Activated CD8-positive, alpha-beta T cell treated with anti-CD3 and anti-CD28 coated beads for 36 hours (primary cell): ENCODE measurements at regions of chr7 and their contacts with region 1.

Region 1: DNA sequence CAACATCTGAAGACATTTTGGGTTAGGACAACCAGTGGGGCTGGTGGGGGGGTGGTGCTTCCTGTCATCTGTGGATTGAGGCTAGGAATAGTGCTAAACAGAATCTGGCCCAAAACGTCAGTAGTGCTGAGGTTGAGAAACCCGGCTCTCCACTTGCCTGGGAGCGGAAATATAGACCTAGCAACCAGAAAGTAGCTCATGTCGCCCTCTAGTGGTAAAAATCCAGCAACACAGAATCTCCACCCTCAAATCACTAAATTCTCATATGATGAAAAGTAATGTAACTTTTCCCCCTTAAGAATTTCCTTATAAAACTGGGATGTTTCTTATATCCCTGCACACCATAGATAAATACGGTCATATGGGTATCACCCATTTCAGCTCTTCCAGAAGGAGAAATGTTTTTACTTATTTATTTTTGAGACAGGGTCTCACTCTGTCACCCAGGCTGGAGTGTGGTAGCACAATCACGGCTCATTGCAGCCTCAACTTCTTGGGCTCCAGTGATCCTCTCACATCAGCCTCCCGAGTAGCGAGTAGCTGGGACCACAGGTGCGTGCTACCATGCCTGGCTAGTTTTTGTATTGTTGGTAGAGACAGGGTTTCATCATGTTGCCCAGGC is 34.4 kb downstream of the ZC3HAV1 start:
- DNase-seq: peak; percentile 80
- ATAC-seq: peak; percentile 70
- H3K4me3 Mint-ChIP-seq: peak overlapping the region; percentile 37
- H3K27ac Mint-ChIP-seq: peak overlapping the region; percentile 85
- H3K4me1 Mint-ChIP-seq: peaks cover 62% of the 10 kb centered on the region
- H3K27me3 Mint-ChIP-seq: no peaks in the 10 kb centered on the region
- CTCF ChIP-seq: peak; percentile 80

Region 2: GRCh38 chr7:138886501-138886917 is 188.6 kb before region 1 on chr7:
- CTCF ChIA-PET with region 1: interaction called, 21 read pairs
- POLR2A ChIA-PET with region 1: no interaction called
- intact Hi-C with region 1: loop called (anchors 10 kb)
- DNase-seq: peak; percentile 55
- ATAC-seq: peak; percentile 78
- H3K4me3 Mint-ChIP-seq: no peak overlapping the region
- H3K27ac Mint-ChIP-seq: peak overlapping the region; percentile 77
- H3K4me1 Mint-ChIP-seq: peaks cover 18% of the 10 kb centered on the region
- H3K27me3 Mint-ChIP-seq: no peaks in the 10 kb centered on the region
- CTCF ChIP-seq: peak; percentile 78

Region 3: GRCh38 chr7:139029353-139029752 is 45.8 kb before region 1 on chr7:
- CTCF ChIA-PET with region 1: interaction called, 10 read pairs
- POLR2A ChIA-PET with region 1: no interaction called
- intact Hi-C with region 1: no loop called
- DNase-seq: no peak
- ATAC-seq: no peak
- H3K4me3 Mint-ChIP-seq: no peak overlapping the region
- H3K27ac Mint-ChIP-seq: no peak overlapping the region
- H3K4me1 Mint-ChIP-seq: peaks cover 11% of the 10 kb centered on the region
- H3K27me3 Mint-ChIP-seq: no peaks in the 10 kb centered on the region
- CTCF ChIP-seq: no peak

Region 4: DNA sequence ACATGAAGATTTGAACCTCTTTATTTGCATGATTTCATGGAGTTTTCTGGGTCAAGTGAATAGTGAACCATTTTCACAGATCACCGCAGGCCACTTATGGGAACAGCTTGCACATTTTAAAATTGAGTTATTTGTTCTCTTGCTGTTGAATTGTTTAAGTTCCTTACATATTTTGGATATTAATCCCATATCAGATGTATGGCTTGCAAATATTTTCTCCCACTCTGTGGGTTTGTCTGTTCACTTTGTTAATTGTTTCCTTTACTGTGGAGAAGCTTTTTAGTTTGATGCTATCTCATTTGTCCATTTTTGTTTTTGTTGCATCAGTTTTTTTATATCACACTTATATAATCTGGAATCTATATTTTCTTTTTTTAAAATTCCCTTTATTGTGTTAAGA is 25.2 kb before region 1 on chr7:
- CTCF ChIA-PET with region 1: interaction called, 18 read pairs
- POLR2A ChIA-PET with region 1: interaction called, 3 read pairs
- intact Hi-C with region 1: no loop called
- DNase-seq: no peak
- ATAC-seq: no peak
- H3K4me3 Mint-ChIP-seq: no peak overlapping the region
- H3K27ac Mint-ChIP-seq: peak overlapping the region; percentile 58
- H3K4me1 Mint-ChIP-seq: peaks cover 47% of the 10 kb centered on the region
- H3K27me3 Mint-ChIP-seq: no peaks in the 10 kb centered on the region
- CTCF ChIP-seq: no peak

Region 5: DNA sequence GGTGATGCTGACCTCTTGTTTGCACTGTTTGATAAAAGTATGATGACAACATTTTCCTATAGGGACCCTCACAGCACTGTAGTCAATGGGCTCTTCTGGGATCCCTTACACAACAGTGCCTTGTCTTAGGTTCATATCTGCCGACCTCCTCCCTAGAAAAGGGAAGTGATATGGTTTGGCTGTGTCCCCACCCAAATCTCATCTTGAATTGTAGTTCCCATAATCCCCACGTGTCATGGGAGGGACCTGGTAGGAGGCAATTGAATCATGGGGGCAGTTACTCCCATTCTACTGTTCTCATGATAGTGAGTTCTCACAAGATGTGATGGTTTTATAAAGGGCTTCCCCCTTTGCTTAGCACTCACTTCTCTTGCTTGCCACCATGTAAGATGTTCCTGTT is 11.3 kb after region 1 on chr7:
- CTCF ChIA-PET with region 1: interaction called, 33 read pairs
- POLR2A ChIA-PET with region 1: interaction called, 5 read pairs
- intact Hi-C with region 1: no loop called
- DNase-seq: peak; percentile 34
- ATAC-seq: no peak
- H3K4me3 Mint-ChIP-seq: no peak overlapping the region
- H3K27ac Mint-ChIP-seq: peak overlapping the region; percentile 94
- H3K4me1 Mint-ChIP-seq: peaks cover 79% of the 10 kb centered on the region
- H3K27me3 Mint-ChIP-seq: no peaks in the 10 kb centered on the region
- CTCF ChIP-seq: no peak

Region 6: GRCh38 chr7:139242741-139243281 is 167.7 kb after region 1 on chr7:
- CTCF ChIA-PET with region 1: no interaction called
- POLR2A ChIA-PET with region 1: no interaction called
- intact Hi-C with region 1: no loop called
- DNase-seq: no peak
- ATAC-seq: peak; percentile 55
- H3K4me3 Mint-ChIP-seq: no peak overlapping the region
- H3K27ac Mint-ChIP-seq: no peak overlapping the region
- H3K4me1 Mint-ChIP-seq: peaks cover 6% of the 10 kb centered on the region
- H3K27me3 Mint-ChIP-seq: no peaks in the 10 kb centered on the region
- CTCF ChIP-seq: no peak